Activated naive CD4-positive, alpha-beta T cell treated with anti-CD3 and anti-CD28 coated beads for 36 hours (primary cell): ENCODE measurements at regions of chr16 and their contacts with region 1.

Region 1: GRCh38 chr16:70737377-70738082 is 51.7 kb upstream of the MTSS2 start:
- DNase-seq: peak; percentile 87
- H3K4me3 Mint-ChIP-seq: peak overlapping the region; percentile 55
- H3K27ac Mint-ChIP-seq: peak overlapping the region; percentile 93
- H3K4me1 Mint-ChIP-seq: peaks cover 66% of the 10 kb centered on the region
- H3K27me3 Mint-ChIP-seq: no peaks in the 10 kb centered on the region

Region 2: GRCh38 chr16:70342016-70342415 is 395.5 kb before region 1 on chr16:
- CTCF ChIA-PET with region 1: no interaction called
- intact Hi-C with region 1: loop called (anchors 1 kb)
- DNase-seq: no peak
- H3K4me3 Mint-ChIP-seq: no peak overlapping the region
- H3K27ac Mint-ChIP-seq: no peak overlapping the region
- H3K4me1 Mint-ChIP-seq: peaks cover 8% of the 10 kb centered on the region
- H3K27me3 Mint-ChIP-seq: no peaks in the 10 kb centered on the region

Region 3: GRCh38 chr16:70402916-70403659 is 334.4 kb before region 1 on chr16:
- CTCF ChIA-PET with region 1: no interaction called
- intact Hi-C with region 1: loop called (anchors 10 kb)
- DNase-seq: no peak
- H3K4me3 Mint-ChIP-seq: no peak overlapping the region
- H3K27ac Mint-ChIP-seq: peak overlapping the region; percentile 25
- H3K4me1 Mint-ChIP-seq: peaks cover 46% of the 10 kb centered on the region
- H3K27me3 Mint-ChIP-seq: no peaks in the 10 kb centered on the region

Region 4: GRCh38 chr16:70477354-70477753 is 260.2 kb before region 1 on chr16:
- CTCF ChIA-PET with region 1: no interaction called
- intact Hi-C with region 1: loop called (anchors 2 kb)
- DNase-seq: no peak
- H3K4me3 Mint-ChIP-seq: no peak overlapping the region
- H3K27ac Mint-ChIP-seq: peak overlapping the region; percentile 90
- H3K4me1 Mint-ChIP-seq: peaks cover 20% of the 10 kb centered on the region
- H3K27me3 Mint-ChIP-seq: no peaks in the 10 kb centered on the region

Region 5: DNA sequence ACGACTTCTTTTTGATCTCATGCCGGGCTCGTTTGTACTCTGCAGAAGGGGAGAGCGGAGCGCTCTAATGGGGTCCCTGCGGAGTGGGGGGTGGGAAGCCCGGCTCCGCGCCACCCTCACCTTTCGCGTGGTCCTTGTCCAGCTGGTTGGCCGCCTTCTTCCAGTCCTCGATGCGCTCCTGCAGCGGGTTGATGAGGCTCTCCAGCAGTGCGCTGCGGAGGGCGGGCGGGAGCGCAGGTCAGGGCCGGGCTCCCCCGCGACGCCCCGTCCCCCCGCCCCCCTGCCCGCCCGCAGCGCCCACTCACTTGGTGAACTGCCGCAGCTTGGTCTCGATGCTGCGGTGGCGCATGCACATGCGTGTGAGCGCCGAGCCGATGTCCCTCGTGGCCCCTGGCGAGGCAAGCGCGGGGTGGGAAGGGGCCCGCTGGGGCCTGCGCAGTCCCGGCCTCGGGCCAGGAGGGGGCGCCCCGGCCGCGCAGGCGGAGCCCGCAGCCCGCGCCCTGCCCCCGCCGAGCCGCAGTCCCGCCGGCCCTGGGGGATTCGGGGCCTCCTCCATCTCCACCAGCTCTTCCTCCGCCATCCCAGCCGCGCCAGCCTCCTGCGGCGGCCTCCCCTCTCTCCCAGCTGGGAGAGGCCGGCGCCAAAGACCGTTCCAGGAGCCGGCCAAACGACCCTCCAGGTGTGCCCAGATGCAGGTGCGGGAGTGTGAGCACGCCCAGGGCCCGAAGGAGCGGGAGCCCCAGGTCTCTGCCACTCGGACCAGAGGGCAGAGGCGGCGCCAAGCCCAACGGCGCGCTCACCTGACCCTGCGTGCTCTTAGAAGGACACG is 57.6 kb before region 1 on chr16:
- CTCF ChIA-PET with region 1: interaction called, 5 read pairs
- intact Hi-C with region 1: loop called (anchors 1 kb)
- DNase-seq: no peak
- H3K4me3 Mint-ChIP-seq: no peak overlapping the region
- H3K27ac Mint-ChIP-seq: no peak overlapping the region
- H3K4me1 Mint-ChIP-seq: no peaks in the 10 kb centered on the region
- H3K27me3 Mint-ChIP-seq: peaks cover 3% of the 10 kb centered on the region

Region 6: DNA sequence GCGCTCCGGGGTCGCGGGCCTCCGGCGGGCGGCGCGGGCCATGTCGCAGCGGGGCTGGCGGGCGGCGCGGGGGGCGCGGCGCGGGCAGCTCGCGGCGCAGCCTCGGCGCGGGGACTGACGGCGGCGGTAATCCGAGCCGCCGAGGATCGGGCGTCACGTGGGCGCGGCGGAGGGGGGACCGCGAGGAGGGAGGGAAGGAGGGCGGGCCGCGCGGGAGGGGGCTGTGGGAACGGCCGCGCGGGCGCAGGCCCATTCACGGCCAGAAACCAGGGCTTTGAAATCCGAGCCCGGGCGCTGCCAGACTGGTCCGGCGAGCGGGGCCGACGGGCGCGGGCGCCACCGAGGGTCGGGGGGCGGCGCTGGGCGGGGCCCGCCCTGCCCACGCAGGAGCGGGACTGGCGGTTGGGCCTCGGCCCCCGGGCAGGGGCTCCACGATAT is 51.6 kb before region 1 on chr16 and contains the start of gene MTSS2:
- CTCF ChIA-PET with region 1: interaction called, 5 read pairs
- intact Hi-C with region 1: loop called (anchors 1 kb)
- DNase-seq: peak; percentile 31
- H3K4me3 Mint-ChIP-seq: peak within 1 kb of the TSS; percentile 51
- H3K27ac Mint-ChIP-seq: no peak within 1 kb of the TSS
- H3K4me1 Mint-ChIP-seq: peaks cover 2% of the 10 kb centered on the region
- H3K27me3 Mint-ChIP-seq: peaks cover 5% of the 10 kb centered on the region
- total RNA-seq, gene MTSS2: 2.0 TPM

Region 7: DNA sequence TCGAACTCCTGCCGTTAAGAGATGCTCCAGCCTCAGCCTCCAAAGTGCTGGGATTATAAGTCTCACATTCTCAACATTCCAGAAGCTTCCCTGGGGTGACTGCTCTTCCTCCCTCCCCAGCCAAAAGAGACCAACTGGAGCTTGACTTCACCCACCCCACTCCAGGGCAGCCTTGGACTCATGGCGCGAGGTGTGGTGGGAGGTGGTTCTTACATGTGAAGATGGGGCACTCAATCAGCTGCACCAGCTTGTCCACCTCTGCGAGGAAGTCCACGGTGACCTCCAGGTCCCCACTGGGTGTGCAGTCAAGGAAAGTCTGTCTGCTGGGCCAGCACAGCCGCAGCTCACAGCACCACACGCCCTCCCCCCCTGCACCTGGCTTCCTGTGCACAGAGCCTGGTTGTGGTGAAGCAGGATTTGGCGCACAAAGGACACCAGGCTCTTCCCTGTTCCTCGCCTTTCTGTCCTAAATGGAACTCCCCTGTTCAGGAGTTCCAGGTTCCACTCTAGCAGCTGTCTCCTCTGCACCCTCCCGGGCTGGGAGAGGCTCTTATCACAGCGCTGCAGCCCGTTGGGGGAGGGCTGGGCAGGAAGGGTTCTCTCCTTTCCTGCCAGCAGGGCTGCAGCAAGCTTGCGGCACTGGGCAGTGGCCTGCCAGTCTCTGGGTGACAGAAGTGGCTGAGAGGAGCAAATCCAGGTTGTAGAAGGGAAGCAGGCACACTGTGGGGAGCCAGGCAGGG is 42.0 kb before region 1 on chr16:
- CTCF ChIA-PET with region 1: no interaction called
- intact Hi-C with region 1: loop called (anchors 1 kb)
- DNase-seq: peak; percentile 25
- H3K4me3 Mint-ChIP-seq: no peak overlapping the region
- H3K27ac Mint-ChIP-seq: no peak overlapping the region
- H3K4me1 Mint-ChIP-seq: peaks cover 32% of the 10 kb centered on the region
- H3K27me3 Mint-ChIP-seq: no peaks in the 10 kb centered on the region

Region 8: GRCh38 chr16:72371307-72372086 is 1634.0 kb after region 1 on chr16:
- CTCF ChIA-PET with region 1: no interaction called
- intact Hi-C with region 1: no loop called
- DNase-seq: no peak
- H3K4me3 Mint-ChIP-seq: no peak overlapping the region
- H3K27ac Mint-ChIP-seq: no peak overlapping the region
- H3K4me1 Mint-ChIP-seq: no peaks in the 10 kb centered on the region
- H3K27me3 Mint-ChIP-seq: no peaks in the 10 kb centered on the region